ENCODE measurements at regions of chr12 and their contacts with region 1.

Region 1: DNA sequence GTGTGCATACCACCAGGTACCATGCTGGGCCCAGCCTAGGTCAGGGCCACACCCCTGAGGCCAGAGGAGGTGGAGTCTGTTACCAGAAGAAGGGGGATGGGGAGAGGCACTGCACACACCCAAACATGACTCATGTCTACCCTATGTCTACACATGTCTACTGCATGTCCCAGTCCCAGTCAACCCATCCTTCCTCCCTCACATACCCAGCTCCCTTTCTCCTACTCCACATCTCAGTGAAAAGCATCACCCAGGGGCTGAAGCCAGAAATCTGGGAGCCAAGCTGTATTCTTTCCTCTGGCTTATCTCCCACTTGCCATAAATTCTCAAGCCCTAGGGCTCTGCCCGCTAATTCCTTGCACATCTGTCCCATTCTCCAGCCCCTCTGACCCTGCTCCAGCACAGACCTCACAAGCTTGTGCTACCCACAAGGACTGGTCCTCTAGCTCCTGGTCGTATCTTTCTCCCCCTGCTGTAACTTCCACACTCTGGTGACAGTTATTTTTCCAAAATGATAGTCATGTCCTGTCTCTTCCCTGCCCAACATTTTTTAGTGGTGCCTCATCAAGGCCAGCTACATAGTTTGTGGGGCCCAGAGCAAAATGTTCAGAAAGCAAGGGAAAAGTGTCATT is 18.0 kb upstream of the APPL2 start:
- DNase-seq: no peak
- H3K4me3 ChIP-seq: peak overlapping the region; percentile 26
- CTCF ChIP-seq: no peak

Region 2: GRCh38 chr12:105235732-105236476 is 18.1 kb before region 1 on chr12 and contains the start of gene APPL2:
- CTCF ChIA-PET with region 1: interaction called, 7 read pairs
- POLR2A ChIA-PET with region 1: interaction called, 17 read pairs
- DNase-seq: no peak
- H3K4me3 ChIP-seq: peak within 1 kb of the TSS; percentile 78
- CTCF ChIP-seq: no peak

Region 3: GRCh38 chr12:105555556-105556295 is 301.7 kb after region 1 on chr12:
- CTCF ChIA-PET with region 1: no interaction called
- POLR2A ChIA-PET with region 1: no interaction called
- DNase-seq: no peak
- H3K4me3 ChIP-seq: no peak overlapping the region
- CTCF ChIP-seq: no peak

Measured in AG04449 (cell line).